CD4-positive, alpha-beta T cell (primary cell): ENCODE measurements at regions of chr5 and their contacts with region 1.

Region 1: GRCh38 chr5:76256116-76256889 is 146.8 kb upstream of the IQGAP2 start:
- DNase-seq: peak; percentile 38 to 84 (median 49)
- ATAC-seq: peak; percentile 99
- H3K4me3 ChIP-seq: no peak overlapping the region
- H3K4me3 Mint-ChIP-seq: no peak overlapping the region
- H3K27ac ChIP-seq: no peak overlapping the region
- H3K27ac Mint-ChIP-seq: no peak overlapping the region
- H3K4me1 ChIP-seq: peaks cover 4% of the 10 kb centered on the region
- H3K4me1 Mint-ChIP-seq: peaks cover 7% of the 10 kb centered on the region
- H3K27me3 ChIP-seq: no peaks in the 10 kb centered on the region
- H3K27me3 Mint-ChIP-seq: no peaks in the 10 kb centered on the region
- CTCF ChIP-seq: peak; percentile 78

Region 2: GRCh38 chr5:74673011-74673790 is 1583.1 kb before region 1 on chr5:
- CTCF ChIA-PET with region 1: no interaction called
- POLR2A ChIA-PET with region 1: no interaction called
- intact Hi-C with region 1: loop called in 1 of 2 experiments (anchors 10 kb)
- DNase-seq: peak in 3 of 14 experiments; percentile 39 to 40 (median 39)
- ATAC-seq: no peak
- H3K4me3 ChIP-seq: no peak overlapping the region
- H3K4me3 Mint-ChIP-seq: no peak overlapping the region
- H3K27ac ChIP-seq: no peak overlapping the region
- H3K27ac Mint-ChIP-seq: no peak overlapping the region
- H3K4me1 ChIP-seq: no peaks in the 10 kb centered on the region
- H3K4me1 Mint-ChIP-seq: no peaks in the 10 kb centered on the region
- H3K27me3 ChIP-seq: no peaks in the 10 kb centered on the region
- H3K27me3 Mint-ChIP-seq: peaks cover 9% of the 10 kb centered on the region
- CTCF ChIP-seq: peak; percentile 35

Region 3: DNA sequence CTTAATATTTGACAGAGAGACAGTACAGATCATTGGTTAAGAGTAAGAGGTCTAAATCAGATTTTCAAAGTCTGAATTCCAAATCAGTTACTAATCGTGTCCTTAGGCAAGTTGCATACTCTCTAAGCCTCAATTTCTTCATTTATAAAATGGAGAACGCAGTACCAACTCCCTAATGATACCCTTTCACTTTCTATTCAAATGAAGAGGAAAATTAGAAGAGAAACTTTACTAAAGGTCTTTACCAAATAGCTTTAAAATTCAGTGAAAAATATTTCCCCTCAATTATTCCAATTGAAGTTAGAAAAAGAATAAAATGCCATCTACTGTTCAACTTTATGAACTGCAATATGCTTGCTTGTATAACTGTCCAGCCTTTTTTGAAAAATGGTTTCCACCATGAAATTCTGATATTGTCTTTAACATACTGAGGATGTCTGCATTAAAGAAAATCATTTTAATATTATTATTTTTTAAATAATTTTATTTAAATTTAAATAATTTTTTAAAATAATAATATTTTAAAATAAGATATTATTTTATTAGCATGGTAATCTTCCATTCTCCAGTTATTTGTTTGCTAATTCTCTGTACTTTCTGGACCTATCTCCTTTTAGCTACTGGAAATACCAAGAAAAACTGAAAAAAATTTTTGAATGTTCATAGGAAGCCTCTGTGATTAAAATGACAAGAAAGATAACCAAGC is 575.0 kb before region 1 on chr5:
- CTCF ChIA-PET with region 1: no interaction called
- POLR2A ChIA-PET with region 1: no interaction called
- intact Hi-C with region 1: loop called in 1 of 2 experiments (anchors 5 kb)
- DNase-seq: peak in 3 of 14 experiments; percentile 58 to 61 (median 59)
- ATAC-seq: peak; percentile 38
- H3K4me3 ChIP-seq: no peak overlapping the region
- H3K4me3 Mint-ChIP-seq: no peak overlapping the region
- H3K27ac ChIP-seq: no peak overlapping the region
- H3K27ac Mint-ChIP-seq: no peak overlapping the region
- H3K4me1 ChIP-seq: no peaks in the 10 kb centered on the region
- H3K4me1 Mint-ChIP-seq: peaks cover 11% of the 10 kb centered on the region
- H3K27me3 ChIP-seq: no peaks in the 10 kb centered on the region
- H3K27me3 Mint-ChIP-seq: no peaks in the 10 kb centered on the region
- CTCF ChIP-seq: peak; percentile 82

Region 4: GRCh38 chr5:75734913-75735789 is 521.2 kb before region 1 on chr5:
- CTCF ChIA-PET with region 1: no interaction called
- POLR2A ChIA-PET with region 1: no interaction called
- intact Hi-C with region 1: loop called (anchors 1 to 5 kb)
- DNase-seq: peak in 7 of 14 experiments; percentile 4 to 44 (median 21)
- ATAC-seq: no peak
- H3K4me3 ChIP-seq: no peak overlapping the region
- H3K4me3 Mint-ChIP-seq: no peak overlapping the region
- H3K27ac ChIP-seq: no peak overlapping the region
- H3K27ac Mint-ChIP-seq: no peak overlapping the region
- H3K4me1 ChIP-seq: no peaks in the 10 kb centered on the region
- H3K4me1 Mint-ChIP-seq: no peaks in the 10 kb centered on the region
- H3K27me3 ChIP-seq: no peaks in the 10 kb centered on the region
- H3K27me3 Mint-ChIP-seq: peaks cover 6% of the 10 kb centered on the region
- CTCF ChIP-seq: peak; percentile 26

Region 5: DNA sequence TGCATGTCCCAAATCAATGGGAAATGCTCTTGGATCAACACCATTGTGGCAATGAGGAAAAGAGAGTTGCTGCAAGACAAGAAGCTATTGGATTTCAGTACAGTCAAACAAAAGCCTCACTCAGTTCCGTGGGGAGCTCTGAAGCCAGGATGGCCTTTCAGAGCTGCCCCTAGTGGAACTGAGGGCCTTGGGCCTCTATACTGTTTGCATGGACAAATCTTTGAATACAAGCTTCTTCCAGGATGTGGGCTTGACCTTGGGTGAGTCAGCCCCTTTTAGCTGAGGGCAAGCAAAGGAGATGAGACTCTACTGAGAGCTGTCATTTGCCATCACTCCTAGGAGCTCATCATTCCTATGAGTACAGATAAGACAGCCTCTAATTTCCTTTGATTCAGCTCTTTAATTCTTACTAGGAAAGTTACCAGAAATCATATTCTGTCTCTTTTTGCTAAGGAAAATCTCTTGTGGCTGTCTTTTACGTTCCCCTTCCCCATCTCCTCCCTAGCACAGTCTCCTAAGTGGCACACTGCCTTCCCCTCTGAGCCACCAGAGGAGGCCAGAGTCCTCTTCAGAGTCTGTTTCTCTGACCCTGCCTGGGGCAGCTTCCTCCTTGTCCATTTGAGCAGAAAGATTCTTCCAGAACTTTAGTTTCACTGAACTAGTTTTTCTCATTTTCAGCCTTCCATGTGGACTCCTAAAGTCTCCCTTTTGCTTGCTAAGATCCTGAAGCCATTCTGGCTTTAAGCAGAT is 370.3 kb before region 1 on chr5:
- CTCF ChIA-PET with region 1: no interaction called
- POLR2A ChIA-PET with region 1: no interaction called
- intact Hi-C with region 1: loop called in 1 of 2 experiments (anchors 5 kb)
- DNase-seq: peak in 2 of 14 experiments; percentile 6 to 12
- ATAC-seq: no peak
- H3K4me3 ChIP-seq: no peak overlapping the region
- H3K4me3 Mint-ChIP-seq: no peak overlapping the region
- H3K27ac ChIP-seq: no peak overlapping the region
- H3K27ac Mint-ChIP-seq: no peak overlapping the region
- H3K4me1 ChIP-seq: no peaks in the 10 kb centered on the region
- H3K4me1 Mint-ChIP-seq: no peaks in the 10 kb centered on the region
- H3K27me3 ChIP-seq: peaks cover 0 to 2% of the 10 kb centered on the region in 2 experiments
- H3K27me3 Mint-ChIP-seq: peaks cover 5% of the 10 kb centered on the region
- CTCF ChIP-seq: no peak

Region 6: GRCh38 chr5:76016258-76016657 is 240.0 kb before region 1 on chr5:
- CTCF ChIA-PET with region 1: no interaction called
- POLR2A ChIA-PET with region 1: no interaction called
- intact Hi-C with region 1: loop called in 1 of 2 experiments (anchors 5 kb)
- DNase-seq: peak in 1 of 14 experiments; percentile 8
- ATAC-seq: no peak
- H3K4me3 ChIP-seq: no peak overlapping the region
- H3K4me3 Mint-ChIP-seq: no peak overlapping the region
- H3K27ac ChIP-seq: no peak overlapping the region
- H3K27ac Mint-ChIP-seq: no peak overlapping the region
- H3K4me1 ChIP-seq: no peaks in the 10 kb centered on the region
- H3K4me1 Mint-ChIP-seq: no peaks in the 10 kb centered on the region
- H3K27me3 ChIP-seq: peaks cover 0 to 3% of the 10 kb centered on the region in 2 experiments
- H3K27me3 Mint-ChIP-seq: peaks cover 34% of the 10 kb centered on the region
- CTCF ChIP-seq: no peak

Region 7: DNA sequence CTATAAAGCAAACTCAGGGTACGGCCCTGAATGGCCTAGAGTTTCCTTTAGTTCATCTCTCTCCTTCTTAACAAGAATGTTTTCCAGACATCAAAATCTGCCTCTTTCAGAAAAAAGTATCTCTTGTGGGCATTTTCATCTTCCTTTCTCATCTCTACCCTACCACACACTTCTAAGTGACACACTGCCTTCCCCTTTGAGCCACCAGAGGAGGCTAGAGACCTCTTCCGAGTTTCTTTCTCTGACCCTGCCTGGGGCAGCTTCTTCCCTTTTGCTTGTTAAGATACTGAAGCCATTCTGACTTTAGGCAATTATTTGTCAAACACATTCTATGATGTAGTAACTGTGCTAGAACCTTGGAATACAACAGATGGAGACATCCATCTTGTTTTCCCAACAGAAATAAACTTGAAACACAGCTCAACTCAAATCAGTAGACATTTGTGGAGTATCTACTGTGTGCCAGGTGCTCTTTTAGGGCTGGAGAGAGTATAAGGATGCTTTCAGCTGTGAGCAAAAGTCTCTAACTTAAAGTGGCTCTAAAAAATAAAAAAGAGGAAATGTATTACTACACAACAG is 181.7 kb before region 1 on chr5:
- CTCF ChIA-PET with region 1: no interaction called
- POLR2A ChIA-PET with region 1: no interaction called
- intact Hi-C with region 1: loop called (anchors 1 to 5 kb)
- DNase-seq: peak in 5 of 14 experiments; percentile 9 to 50 (median 42)
- ATAC-seq: peak; percentile 66
- H3K4me3 ChIP-seq: no peak overlapping the region
- H3K4me3 Mint-ChIP-seq: no peak overlapping the region
- H3K27ac ChIP-seq: no peak overlapping the region
- H3K27ac Mint-ChIP-seq: no peak overlapping the region
- H3K4me1 ChIP-seq: no peaks in the 10 kb centered on the region
- H3K4me1 Mint-ChIP-seq: no peaks in the 10 kb centered on the region
- H3K27me3 ChIP-seq: peaks cover 8 to 15% of the 10 kb centered on the region in 2 experiments
- H3K27me3 Mint-ChIP-seq: peaks cover 89% of the 10 kb centered on the region
- CTCF ChIP-seq: peak; percentile 41

Region 8: GRCh38 chr5:77358255-77359205 is 1102.2 kb after region 1 on chr5:
- CTCF ChIA-PET with region 1: no interaction called
- POLR2A ChIA-PET with region 1: no interaction called
- intact Hi-C with region 1: no loop called
- DNase-seq: no peak
- ATAC-seq: no peak
- H3K4me3 ChIP-seq: no peak overlapping the region
- H3K4me3 Mint-ChIP-seq: no peak overlapping the region
- H3K27ac ChIP-seq: no peak overlapping the region
- H3K27ac Mint-ChIP-seq: no peak overlapping the region
- H3K4me1 ChIP-seq: no peaks in the 10 kb centered on the region
- H3K4me1 Mint-ChIP-seq: no peaks in the 10 kb centered on the region
- H3K27me3 ChIP-seq: no peaks in the 10 kb centered on the region
- H3K27me3 Mint-ChIP-seq: no peaks in the 10 kb centered on the region
- CTCF ChIP-seq: no peak